ENCODE measurements at regions of chr11 and their contacts with region 1.

Region 1: GRCh38 chr11:33362051-33362910 is 105.1 kb downstream of the HIPK3 start:
- DNase-seq: no peak
- H3K4me3 ChIP-seq: no peak overlapping the region
- H3K27ac ChIP-seq: no peak overlapping the region
- H3K4me1 ChIP-seq: peaks cover 0 to 10% (median 7%) of the 10 kb centered on the region in 4 donors
- H3K27me3 ChIP-seq: no peaks in the 10 kb centered on the region
- CTCF ChIP-seq: peak; percentile 59 to 73 (median 69)
- EP300 ChIP-seq: no peak
- POLR2A ChIP-seq: no peak

Region 2: DNA sequence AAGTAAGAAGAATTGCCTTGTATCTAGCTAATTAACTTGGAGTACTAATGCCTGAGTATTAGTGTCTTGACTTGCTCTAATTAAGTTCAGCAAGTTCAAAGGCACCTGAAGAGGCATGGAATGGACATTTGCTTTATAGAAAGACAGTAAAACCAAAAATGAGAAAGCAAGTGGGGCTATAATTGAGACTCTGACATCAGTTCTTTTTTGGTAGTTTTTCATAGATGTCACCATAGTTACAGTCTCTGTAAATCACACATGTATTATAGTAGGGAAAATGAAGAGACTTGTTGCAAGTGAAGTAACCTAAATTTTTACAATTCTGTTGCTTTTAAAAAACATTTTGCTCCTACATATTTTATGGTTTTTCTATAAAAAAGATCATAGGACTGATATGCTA is 72.9 kb after region 1 on chr11:
- intact Hi-C with region 1: no loop called
- DNase-seq: no peak
- H3K4me3 ChIP-seq: no peak overlapping the region
- H3K27ac ChIP-seq: no peak overlapping the region
- H3K4me1 ChIP-seq: no peaks in the 10 kb centered on the region
- H3K27me3 ChIP-seq: peaks cover 0 to 13% (median 0%) of the 10 kb centered on the region in 4 donors
- CTCF ChIP-seq: no peak
- EP300 ChIP-seq: no peak
- POLR2A ChIP-seq: no peak

Region 3: DNA sequence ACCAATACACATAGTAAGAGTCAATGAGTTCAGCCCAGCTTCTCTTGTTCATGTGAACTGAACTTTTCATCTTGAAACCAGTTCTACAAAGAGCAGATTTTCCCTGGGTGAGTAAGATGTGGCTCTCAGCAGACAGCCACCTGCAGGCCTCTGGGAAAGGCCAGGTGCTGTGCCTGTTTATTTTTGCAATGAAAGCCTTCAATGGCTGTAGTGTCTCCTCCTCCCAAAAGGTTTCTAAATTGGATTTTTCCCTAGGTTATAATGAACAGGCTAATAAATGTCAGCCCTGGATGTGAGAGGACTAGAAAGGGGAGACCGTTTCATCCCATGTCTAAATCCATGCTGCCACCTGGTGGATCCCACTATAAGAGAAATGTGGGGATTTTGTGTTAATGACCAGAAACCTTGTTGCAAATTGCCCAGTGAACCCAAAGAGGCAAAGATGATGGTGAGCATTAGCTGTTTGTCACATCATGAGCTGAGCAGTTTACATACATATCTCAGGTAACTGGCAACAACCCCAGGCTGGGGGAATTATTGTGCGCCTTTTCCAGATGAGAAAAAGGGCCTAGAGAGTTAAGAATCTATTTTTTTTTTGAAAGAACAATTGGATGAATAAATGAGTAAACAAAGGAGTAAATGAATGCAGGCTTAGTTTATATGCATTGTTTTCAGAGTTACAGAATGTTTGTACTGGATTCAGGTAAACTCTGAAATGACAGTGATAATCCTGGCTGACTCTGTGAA is 325.6 kb after region 1 on chr11:
- intact Hi-C with region 1: loop called (anchors 5 kb)
- DNase-seq: no peak
- H3K4me3 ChIP-seq: no peak overlapping the region
- H3K27ac ChIP-seq: no peak overlapping the region
- H3K4me1 ChIP-seq: peaks cover 25 to 33% (median 30%) of the 10 kb centered on the region in 4 donors
- H3K27me3 ChIP-seq: no peaks in the 10 kb centered on the region
- CTCF ChIP-seq: peak; percentile 38 to 55 (median 53)
- EP300 ChIP-seq: no peak
- POLR2A ChIP-seq: no peak

Region 4: GRCh38 chr11:33742249-33742851 is 380.1 kb after region 1 on chr11:
- intact Hi-C with region 1: loop called (anchors 5 kb)
- DNase-seq: no peak
- H3K4me3 ChIP-seq: no peak overlapping the region
- H3K27ac ChIP-seq: no peak overlapping the region
- H3K4me1 ChIP-seq: peaks cover 4 to 9% (median 6%) of the 10 kb centered on the region in 4 donors
- H3K27me3 ChIP-seq: no peaks in the 10 kb centered on the region
- CTCF ChIP-seq: peak; percentile 51 to 58 (median 55)
- EP300 ChIP-seq: no peak
- POLR2A ChIP-seq: no peak

Region 5: DNA sequence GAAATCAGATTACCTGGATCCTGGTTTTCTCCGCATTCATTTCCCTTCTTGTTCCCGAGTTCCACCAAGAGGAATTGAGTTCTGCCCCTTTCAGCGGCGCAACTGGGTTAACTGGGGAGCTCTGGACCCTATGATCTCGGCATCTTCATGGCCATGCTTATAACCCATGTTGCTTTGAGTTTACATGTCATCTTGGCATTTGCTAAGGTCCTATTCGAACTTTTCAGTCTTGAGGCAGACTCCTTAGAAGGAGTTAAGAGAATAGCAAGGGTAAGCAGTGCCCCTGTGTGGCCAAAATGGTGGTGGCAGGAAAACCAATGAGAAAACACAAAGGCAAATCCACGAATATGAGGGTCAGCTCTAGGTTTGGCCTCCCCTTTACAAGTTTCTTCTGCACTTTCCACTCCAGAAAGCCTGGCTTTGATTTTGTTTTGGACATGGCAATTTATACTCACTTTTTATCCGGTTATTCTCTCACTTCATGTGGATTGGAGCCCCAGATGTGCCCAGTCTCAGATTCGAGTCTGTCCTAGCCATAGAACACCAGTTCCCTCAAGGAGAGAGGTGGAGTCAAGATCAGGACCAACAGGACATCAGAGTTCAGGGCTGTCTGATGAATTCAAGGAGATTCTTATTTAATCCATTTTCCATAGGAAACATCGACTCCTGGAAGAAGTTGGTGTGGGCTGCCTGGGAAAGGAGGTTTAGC is 467.3 kb after region 1 on chr11:
- intact Hi-C with region 1: loop called (anchors 5 kb)
- DNase-seq: no peak
- H3K4me3 ChIP-seq: peak overlapping the region; percentile 48 to 58 (median 54)
- H3K27ac ChIP-seq: no peak overlapping the region
- H3K4me1 ChIP-seq: peaks cover 7 to 16% (median 10%) of the 10 kb centered on the region in 4 donors
- H3K27me3 ChIP-seq: peaks cover 0 to 79% (median 16%) of the 10 kb centered on the region in 4 donors
- CTCF ChIP-seq: peak; percentile 70 to 83 (median 79)
- EP300 ChIP-seq: no peak
- POLR2A ChIP-seq: no peak